BJ (cell line): ENCODE measurements at regions of chr4 and their contacts with region 1.

Region 1: DNA sequence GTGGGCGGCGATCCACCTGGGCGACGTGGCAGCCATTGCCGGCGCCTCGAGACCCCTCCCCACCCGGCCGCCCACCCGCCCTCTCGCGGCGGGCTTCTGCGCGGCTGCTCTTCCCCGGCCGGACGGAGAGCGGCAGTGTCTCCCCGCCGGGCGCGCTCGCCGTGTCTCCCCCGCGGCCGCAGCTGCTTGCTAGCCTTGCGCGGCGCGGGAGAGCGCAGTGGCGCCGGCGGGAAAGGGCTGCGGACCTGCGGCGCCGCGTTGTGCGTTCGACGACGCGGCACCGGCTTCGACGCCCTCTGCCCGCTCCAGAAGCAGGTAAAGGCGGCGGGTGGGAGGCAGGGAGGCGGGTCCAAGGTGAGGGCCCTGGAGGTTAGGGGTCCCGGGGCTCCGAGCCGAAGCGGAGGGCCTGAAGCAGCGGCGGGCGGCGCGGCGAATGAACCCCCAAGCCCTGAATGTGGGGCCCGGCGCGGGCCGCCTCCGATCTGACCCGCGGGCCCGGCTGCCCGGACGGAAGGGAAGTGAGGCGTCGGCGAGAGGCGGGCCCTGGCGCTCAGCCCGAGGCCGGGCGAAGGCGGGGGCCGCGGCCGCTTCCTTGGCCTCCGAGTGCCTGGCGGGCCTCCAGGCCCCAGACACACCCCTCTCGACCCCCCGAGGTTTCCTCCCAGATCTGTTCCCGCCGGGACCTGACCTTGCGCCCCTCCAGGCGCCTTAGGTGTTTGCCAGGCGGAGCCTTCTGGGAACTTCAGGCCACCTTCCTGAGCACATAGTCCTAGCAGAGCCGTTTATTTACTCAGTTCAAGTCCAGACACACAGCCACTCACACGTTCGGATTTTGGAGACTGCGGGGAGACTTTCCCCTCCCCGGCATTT is at the start of gene N4BP2:
- DNase-seq: no peak
- H3K4me3 ChIP-seq: peak within 1 kb of the TSS; percentile 81
- H3K27me3 ChIP-seq: no peaks in the 10 kb centered on the region
- CTCF ChIP-seq: peak; percentile 40
- polyA plus RNA-seq, gene N4BP2: 1.5 and 2.3 TPM in 2 replicates

Region 2: DNA sequence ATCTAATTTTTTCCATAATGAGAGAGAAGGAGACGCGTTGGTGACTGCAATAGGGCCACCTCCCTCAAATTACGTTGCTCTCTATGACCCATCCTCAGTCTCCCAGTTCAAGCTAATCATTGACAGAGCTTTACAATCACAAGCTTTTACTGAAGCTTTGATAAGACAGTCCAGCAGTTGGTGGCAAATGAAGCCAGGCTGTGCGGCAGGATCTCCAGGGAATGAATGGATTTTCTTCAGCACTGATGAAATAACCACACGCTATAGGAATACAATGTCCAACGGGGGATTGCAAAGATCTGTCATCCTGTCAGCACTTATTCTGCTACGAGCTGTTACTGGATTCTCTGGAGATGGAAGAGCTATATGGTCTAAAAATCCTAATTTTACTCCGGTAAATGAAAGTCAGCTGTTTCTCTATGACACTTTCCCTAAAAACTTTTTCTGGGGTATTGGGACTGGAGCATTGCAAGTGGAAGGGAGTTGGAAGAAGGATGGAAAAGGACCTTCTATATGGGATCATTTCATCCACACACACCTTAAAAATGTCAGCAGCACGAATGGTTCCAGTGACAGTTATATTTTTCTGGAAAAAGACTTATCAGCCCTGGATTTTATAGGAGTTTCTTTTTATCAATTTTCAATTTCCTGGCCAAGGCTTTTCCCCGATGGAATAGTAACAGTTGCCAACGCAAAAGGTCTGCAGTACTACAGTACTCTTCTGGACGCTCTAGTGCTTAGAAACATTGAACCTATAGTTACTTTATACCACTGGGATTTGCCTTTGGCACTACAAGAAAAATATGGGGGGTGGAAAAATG is 650.0 kb before region 1 on chr4 and contains the start of gene KLB:
- CTCF ChIA-PET with region 1: no interaction called
- POLR2A ChIA-PET with region 1: interaction called, 11 read pairs
- DNase-seq: no peak
- H3K4me3 ChIP-seq: no peak within 1 kb of the TSS
- H3K27me3 ChIP-seq: no peaks in the 10 kb centered on the region
- CTCF ChIP-seq: no peak
- polyA plus RNA-seq, gene KLB: not detected in 2 replicates

Region 3: DNA sequence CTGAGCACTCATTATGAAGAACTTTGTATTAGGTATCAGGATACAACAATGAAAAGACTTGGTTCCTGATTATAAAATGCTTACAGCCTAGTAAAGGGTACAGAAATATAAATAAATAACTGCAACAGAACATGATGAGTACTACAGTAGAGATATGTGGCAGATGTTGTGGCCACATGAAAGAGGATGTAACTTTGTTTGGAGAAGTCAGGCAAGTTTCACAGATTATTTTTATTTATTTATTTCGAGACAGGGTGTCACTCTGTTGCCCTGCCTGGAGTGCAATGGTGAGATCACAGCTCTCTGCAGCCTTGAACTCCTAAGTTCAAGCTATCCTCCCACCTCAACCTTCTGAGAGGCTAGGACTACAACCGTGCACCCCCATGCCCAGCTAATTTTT is 374.8 kb before region 1 on chr4:
- CTCF ChIA-PET with region 1: no interaction called
- POLR2A ChIA-PET with region 1: no interaction called
- DNase-seq: no peak
- H3K4me3 ChIP-seq: no peak overlapping the region
- H3K27me3 ChIP-seq: no peaks in the 10 kb centered on the region
- CTCF ChIP-seq: no peak

Region 4: DNA sequence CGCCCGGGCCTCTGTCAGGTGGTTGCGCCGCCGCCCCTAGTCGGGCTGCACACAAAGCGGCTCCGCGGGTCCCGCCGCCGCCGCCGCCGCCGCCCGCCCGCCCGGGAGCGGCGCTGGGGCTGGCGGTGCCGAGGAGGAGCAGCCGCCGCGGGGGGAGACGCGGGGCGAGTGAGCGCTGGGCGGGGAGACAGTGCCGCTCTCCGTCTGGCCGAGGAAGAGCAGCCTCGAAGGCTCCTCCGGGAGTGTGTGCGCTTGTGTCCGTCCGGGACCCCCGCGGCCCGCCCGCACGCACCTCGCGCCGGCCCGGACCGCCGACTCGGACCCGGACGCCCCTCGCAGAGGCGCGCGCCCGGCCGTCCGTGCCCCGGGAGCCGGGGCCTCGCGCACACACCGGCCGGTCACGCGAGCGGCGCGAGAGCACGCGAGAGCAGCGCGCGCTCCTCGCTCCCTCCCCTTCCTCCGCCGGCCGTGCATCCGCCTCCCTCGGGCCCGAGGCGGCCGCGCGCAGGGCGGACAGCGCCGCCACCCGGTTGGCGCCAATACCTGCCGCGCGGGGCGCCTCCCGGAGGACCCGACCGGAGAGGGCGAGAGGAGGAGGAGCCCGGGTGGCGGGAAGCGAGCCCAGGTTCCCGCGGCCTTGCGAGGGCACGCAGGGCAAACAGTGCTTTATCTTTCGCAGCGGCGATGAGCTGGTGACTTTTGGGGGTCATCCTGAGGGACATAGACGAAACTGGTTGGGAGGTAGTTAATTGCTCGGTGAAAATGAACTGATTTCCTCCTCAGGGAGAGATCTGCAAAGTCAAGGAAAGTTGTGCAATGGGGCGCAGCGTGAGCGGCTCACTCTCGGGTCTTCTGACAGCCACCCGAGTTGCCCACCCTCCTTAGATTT is 79.2 kb before region 1 on chr4 and contains the start of gene PDS5A:
- CTCF ChIA-PET with region 1: interaction called, 12 read pairs
- POLR2A ChIA-PET with region 1: no interaction called
- DNase-seq: peak; percentile 31
- H3K4me3 ChIP-seq: peak within 1 kb of the TSS; percentile 94
- H3K27me3 ChIP-seq: no peaks in the 10 kb centered on the region
- CTCF ChIP-seq: peak; percentile 62
- polyA plus RNA-seq, gene PDS5A: 17.8 and 37.7 TPM in 2 replicates

Region 5: GRCh38 chr4:40038972-40039371 is 18.0 kb before region 1 on chr4:
- CTCF ChIA-PET with region 1: no interaction called
- POLR2A ChIA-PET with region 1: no interaction called
- DNase-seq: no peak
- H3K4me3 ChIP-seq: no peak overlapping the region
- H3K27me3 ChIP-seq: no peaks in the 10 kb centered on the region
- CTCF ChIP-seq: no peak

Region 6: DNA sequence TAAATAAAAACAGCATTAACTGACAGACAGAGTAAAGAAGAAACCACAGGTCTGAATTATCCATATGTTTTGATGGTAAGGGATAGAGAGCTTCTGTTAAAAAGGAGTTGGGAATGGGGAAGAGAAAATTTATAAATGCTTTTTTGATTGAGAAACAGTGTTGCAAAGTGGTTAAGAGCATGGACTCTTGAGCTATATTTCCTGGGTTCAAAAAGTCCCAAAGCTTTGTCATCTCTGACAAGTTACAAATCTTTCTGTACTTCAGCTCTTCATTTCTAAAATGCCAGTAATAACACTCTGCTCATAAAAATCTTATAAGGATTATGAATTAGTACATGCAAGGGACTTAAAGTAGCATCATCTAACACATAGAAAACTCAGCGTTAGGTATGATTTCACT is 61.9 kb after region 1 on chr4:
- CTCF ChIA-PET with region 1: no interaction called
- POLR2A ChIA-PET with region 1: interaction called, 23 read pairs
- DNase-seq: no peak
- H3K4me3 ChIP-seq: no peak overlapping the region
- H3K27me3 ChIP-seq: no peaks in the 10 kb centered on the region
- CTCF ChIP-seq: no peak

Region 7: GRCh38 chr4:40309250-40309774 is 252.4 kb after region 1 on chr4:
- CTCF ChIA-PET with region 1: interaction called, 14 read pairs
- POLR2A ChIA-PET with region 1: no interaction called
- DNase-seq: no peak
- H3K4me3 ChIP-seq: no peak overlapping the region
- H3K27me3 ChIP-seq: no peaks in the 10 kb centered on the region; the same call in 1 of the 2 replicates
- CTCF ChIP-seq: peak; percentile 92

Region 8: GRCh38 chr4:40325189-40326019 is 268.5 kb after region 1 on chr4:
- CTCF ChIA-PET with region 1: interaction called, 16 read pairs
- POLR2A ChIA-PET with region 1: no interaction called
- DNase-seq: no peak
- H3K4me3 ChIP-seq: no peak overlapping the region
- H3K27me3 ChIP-seq: peaks cover 2% of the 10 kb centered on the region; the same call in 1 of the 2 replicates
- CTCF ChIP-seq: peak; percentile 90